ENCODE measurements at regions of chr16 and their contacts with region 1.

Region 1: GRCh38 chr16:29805378-29806098 is 791 bp upstream of the MAZ start:
- DNase-seq: peak; percentile 96
- H3K4me3 ChIP-seq: peak overlapping the region; percentile 74 to 89 (median 76)
- H3K27ac ChIP-seq: peak overlapping the region; percentile 56
- H3K4me1 ChIP-seq: peaks cover 31% of the 10 kb centered on the region
- H3K27me3 ChIP-seq: no peaks in the 10 kb centered on the region
- CTCF ChIP-seq: no peak

Region 2: DNA sequence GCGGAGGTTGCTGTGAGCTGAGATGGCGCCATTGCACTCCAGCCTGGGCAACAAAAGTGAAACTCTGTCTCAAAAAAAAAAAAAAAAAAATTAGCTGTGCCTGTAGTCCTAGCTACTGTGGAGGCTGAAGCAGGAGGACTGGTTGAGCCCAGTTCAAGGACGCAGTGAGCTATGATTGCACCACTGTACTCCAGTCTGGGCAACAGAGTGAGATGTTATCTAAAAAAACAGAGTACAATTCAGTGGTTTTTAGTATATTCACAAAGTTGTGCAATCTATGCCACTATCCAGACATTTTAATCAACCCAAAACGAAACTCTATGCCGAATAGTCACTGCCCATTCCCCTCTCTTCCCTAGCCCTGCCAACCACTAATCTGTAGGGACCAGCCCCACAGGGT is 84.8 kb before region 1 on chr16:
- CTCF ChIA-PET with region 1: no interaction called
- dilution Hi-C with region 1: loop called (anchors 5 kb)
- in situ Hi-C with region 1: no loop called
- intact Hi-C with region 1: no loop called
- DNase-seq: no peak
- H3K4me3 ChIP-seq: no peak overlapping the region
- H3K27ac ChIP-seq: no peak overlapping the region
- H3K4me1 ChIP-seq: peaks cover 4% of the 10 kb centered on the region
- H3K27me3 ChIP-seq: no peaks in the 10 kb centered on the region
- CTCF ChIP-seq: no peak

Region 3: DNA sequence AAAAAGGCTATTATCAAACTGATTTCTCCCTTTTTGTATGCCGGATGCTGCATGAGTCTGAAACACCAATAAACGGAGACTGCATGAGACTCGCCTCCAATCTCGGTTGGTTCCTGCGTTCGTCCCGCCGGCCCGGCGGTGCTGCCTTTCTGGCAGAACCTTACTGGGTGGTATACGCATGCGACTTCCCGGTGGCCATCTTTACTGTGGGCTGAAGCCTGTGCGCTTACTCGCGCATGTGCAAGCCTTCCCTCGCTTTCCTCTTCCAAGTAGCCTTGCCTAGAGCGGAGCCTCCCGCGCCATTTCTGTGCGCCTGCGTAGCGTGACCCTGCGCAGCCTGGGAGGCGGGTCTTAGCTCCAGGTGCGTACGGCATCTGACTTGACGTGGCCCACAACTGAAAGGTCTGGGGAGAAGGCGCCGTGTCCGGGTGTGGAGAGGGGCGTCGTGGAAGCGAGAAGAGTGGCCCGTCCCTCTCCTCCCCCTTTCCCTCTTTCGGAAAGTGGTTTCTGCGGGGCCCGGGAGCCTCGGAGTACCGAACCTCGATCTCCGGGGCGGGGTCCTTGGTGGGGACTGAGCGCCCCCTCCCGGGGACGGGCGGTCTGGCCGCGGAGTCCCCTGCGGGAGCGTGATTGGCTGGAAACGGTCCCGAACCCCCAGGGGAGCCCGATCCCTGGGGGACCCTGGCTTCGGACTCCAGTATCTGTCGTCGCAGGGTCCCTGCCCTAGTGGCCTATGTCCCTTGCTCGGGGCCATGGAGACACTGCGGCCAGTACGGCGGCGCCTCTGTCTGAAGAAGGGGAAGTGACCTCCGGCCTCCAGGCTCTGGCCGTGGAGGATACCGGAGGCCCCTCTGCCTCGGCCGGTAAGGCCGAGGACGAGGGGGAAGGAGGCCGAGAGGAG is 10.5 kb after region 1 on chr16 and contains the start of gene PAGR1:
- CTCF ChIA-PET with region 1: interaction called, 27 read pairs
- dilution Hi-C with region 1: no loop called
- in situ Hi-C with region 1: no loop called
- intact Hi-C with region 1: loop called (anchors 1 kb)
- DNase-seq: peak; percentile 99
- H3K4me3 ChIP-seq: peak within 1 kb of the TSS; percentile 67 to 81 (median 69)
- H3K27ac ChIP-seq: peak within 1 kb of the TSS; percentile 70
- H3K4me1 ChIP-seq: peaks cover 37% of the 10 kb centered on the region
- H3K27me3 ChIP-seq: no peaks in the 10 kb centered on the region
- CTCF ChIP-seq: peak; percentile 64 to 96
- total RNA-seq, gene PAGR1: 13.7 to 24.9 TPM

Region 4: DNA sequence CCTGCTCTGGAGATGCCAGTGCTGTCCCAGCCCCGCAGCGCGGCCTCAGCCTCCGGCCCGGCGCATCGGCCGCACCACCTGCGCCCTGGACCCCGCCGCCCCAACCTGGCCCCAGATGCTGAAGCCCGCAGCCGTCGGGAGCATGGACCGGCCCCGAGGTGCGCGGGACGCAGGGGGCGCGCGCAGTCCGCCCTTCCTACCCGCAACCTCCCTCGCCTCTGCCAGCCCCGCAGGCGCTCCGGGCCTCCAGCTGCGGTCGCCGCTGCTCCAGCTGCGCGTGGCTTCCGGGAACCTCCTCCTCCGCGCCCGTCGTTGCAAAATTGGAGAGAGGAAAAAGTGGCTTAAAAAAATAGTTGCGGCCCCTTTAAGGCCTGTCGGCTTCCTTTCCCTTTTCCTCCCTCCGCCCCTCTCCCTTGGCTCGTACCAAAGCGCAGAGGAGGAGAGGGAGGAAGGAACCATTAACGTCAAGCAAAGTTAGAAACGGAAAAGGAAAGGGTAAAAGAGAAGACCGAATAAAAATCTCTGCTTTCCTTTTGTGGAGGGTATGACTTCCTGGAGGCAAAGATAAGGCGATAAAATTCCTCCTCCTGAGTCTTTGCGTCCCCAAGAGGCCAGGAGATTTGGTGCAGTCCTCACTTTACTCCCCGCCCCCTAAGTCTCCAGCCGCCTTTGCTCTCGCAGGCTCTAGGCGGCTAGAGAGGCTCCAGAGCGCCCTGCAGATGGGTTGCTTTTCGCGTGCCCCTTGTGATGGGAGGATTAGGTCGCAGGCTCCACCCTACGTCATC is 57.5 kb after region 1 on chr16 and contains the start of gene CDIPT:
- CTCF ChIA-PET with region 1: no interaction called
- dilution Hi-C with region 1: no loop called
- in situ Hi-C with region 1: no loop called
- intact Hi-C with region 1: loop called (anchors 1 kb)
- DNase-seq: peak; percentile 92
- H3K4me3 ChIP-seq: peak within 1 kb of the TSS; percentile 83 to 97 (median 89)
- H3K27ac ChIP-seq: peak within 1 kb of the TSS; percentile 98
- H3K4me1 ChIP-seq: peaks cover 3% of the 10 kb centered on the region
- H3K27me3 ChIP-seq: no peaks in the 10 kb centered on the region
- CTCF ChIP-seq: peak; percentile 58 to 72
- total RNA-seq, gene CDIPT: 47.8 to 72.2 TPM

Region 5: DNA sequence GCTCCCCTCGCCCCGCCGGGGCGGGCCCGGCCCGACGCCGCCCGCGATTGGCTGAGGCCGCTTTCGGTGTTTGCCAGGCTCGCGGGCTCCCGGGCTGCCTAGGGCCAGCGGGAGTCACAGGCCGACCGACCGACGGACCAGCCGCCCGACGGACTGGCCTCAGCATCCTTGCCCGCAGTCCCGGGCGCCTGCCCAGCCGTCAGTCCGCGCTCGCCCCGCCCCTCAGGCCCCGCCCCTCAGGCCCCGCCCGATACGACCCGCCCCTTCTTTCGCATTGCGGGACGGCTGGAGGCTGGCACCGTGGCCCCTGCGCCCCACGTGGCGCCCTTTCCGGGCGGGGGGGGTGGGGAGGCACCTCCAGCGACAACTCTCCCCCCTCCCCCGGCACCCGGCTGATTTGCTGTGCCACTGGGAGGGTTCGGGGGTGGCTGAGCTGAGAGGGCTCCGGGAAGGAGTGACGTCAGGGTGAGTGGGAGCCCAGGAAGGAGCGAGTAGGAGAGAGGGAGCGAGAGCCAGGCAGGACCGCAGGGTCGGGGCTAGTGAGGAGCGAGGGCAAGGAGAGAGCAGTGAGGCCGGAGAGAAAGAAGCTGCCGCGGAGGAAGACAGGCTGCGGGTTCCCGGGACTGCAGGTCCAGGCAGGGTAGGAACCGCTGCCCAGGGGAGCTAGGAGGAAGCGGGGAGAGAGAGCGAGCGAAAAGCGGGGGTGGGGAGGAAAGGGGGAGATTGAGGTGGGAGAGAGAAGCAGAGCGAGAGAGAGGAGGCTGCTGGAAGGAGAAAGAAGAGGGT is 94.8 kb after region 1 on chr16 and contains the start of gene ASPHD1:
- CTCF ChIA-PET with region 1: no interaction called
- dilution Hi-C with region 1: no loop called
- in situ Hi-C with region 1: no loop called
- intact Hi-C with region 1: no loop called
- DNase-seq: peak; percentile 84
- H3K4me3 ChIP-seq: peak within 1 kb of the TSS; percentile 61 to 70 (median 68)
- H3K27ac ChIP-seq: no peak within 1 kb of the TSS
- H3K4me1 ChIP-seq: peaks cover 21% of the 10 kb centered on the region
- H3K27me3 ChIP-seq: peaks cover 4% of the 10 kb centered on the region
- CTCF ChIP-seq: no peak
- total RNA-seq, gene ASPHD1: 1.5 to 14.7 TPM

Measured in mammary epithelial cell (primary cell).